ENCODE measurements at regions of chr13 and their contacts with region 1.

Region 1: GRCh38 chr13:75219479-75220237 is 262.3 kb downstream of the TBC1D4 start:
- DNase-seq: peak; percentile 70 to 76 (median 73)
- ATAC-seq: peak; percentile 100
- H3K4me3 ChIP-seq: no peak overlapping the region
- H3K27ac ChIP-seq: no peak overlapping the region
- H3K4me1 ChIP-seq: peaks cover 0 to 3% of the 10 kb centered on the region in 2 experiments; a peak in 2 of 5 replicates
- H3K27me3 ChIP-seq: no peaks in the 10 kb centered on the region
- CTCF ChIP-seq: peak; percentile 80 to 84 (median 81)
- EP300 ChIP-seq: no peak
- POLR2A ChIP-seq: no peak
- RAD21 ChIP-seq: peak; percentile 89 to 93

Region 2: GRCh38 chr13:73754727-73755292 is 1464.8 kb before region 1 on chr13:
- CTCF ChIA-PET with region 1: interaction called, 4 read pairs
- POLR2A ChIA-PET with region 1: no interaction called
- in situ Hi-C with region 1: no loop called
- intact Hi-C with region 1: loop called (anchors 1 kb)
- DNase-seq: peak; percentile 12 to 29 (median 13)
- ATAC-seq: peak; percentile 74
- H3K4me3 ChIP-seq: no peak overlapping the region
- H3K27ac ChIP-seq: no peak overlapping the region
- H3K4me1 ChIP-seq: no peaks in the 10 kb centered on the region
- H3K27me3 ChIP-seq: no peaks in the 10 kb centered on the region
- CTCF ChIP-seq: peak; percentile 21 to 56 (median 54); a peak in 5 of 6 replicates
- EP300 ChIP-seq: no peak
- POLR2A ChIP-seq: no peak
- RAD21 ChIP-seq: peak; percentile 39 to 64

Region 3: GRCh38 chr13:73835138-73835721 is 1384.4 kb before region 1 on chr13:
- CTCF ChIA-PET with region 1: interaction called, 3 read pairs
- POLR2A ChIA-PET with region 1: no interaction called
- in situ Hi-C with region 1: no loop called
- intact Hi-C with region 1: loop called (anchors 1 kb)
- DNase-seq: peak; percentile 20 to 31 (median 24)
- ATAC-seq: no peak
- H3K4me3 ChIP-seq: no peak overlapping the region
- H3K27ac ChIP-seq: no peak overlapping the region
- H3K4me1 ChIP-seq: no peaks in the 10 kb centered on the region
- H3K27me3 ChIP-seq: no peaks in the 10 kb centered on the region
- CTCF ChIP-seq: peak in 2 of 3 experiments; percentile 9 to 45; a peak in 3 of 6 replicates
- EP300 ChIP-seq: no peak
- POLR2A ChIP-seq: no peak
- RAD21 ChIP-seq: peak; percentile 33 to 57

Region 4: DNA sequence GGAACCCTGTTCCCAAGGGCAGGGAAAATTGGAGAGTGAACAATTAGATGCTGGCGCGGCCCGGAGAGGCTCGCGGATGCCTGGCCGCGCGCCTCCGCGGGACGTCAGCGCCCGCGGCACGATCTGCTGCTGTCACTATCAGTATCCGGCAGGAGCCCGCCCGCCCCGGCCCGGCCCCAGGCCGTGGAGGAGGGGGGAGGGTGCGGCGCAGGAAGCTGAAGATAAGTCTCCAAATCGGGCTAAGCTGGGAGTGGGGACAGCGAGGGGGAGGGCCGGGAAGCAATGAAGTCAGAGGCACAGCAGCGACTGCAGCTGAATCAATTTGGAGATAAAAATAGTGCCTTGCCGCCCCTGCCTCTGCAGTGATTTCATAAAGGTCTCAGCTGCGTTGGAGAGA is 643.9 kb before region 1 on chr13:
- CTCF ChIA-PET with region 1: interaction called, 3 read pairs
- POLR2A ChIA-PET with region 1: no interaction called
- in situ Hi-C with region 1: no loop called
- intact Hi-C with region 1: loop called (anchors 2 kb)
- DNase-seq: peak; percentile 19 to 73 (median 40)
- ATAC-seq: peak; percentile 99
- H3K4me3 ChIP-seq: no peak overlapping the region
- H3K27ac ChIP-seq: no peak overlapping the region
- H3K4me1 ChIP-seq: no peaks in the 10 kb centered on the region; a peak in 1 of 5 replicates
- H3K27me3 ChIP-seq: no peaks in the 10 kb centered on the region
- CTCF ChIP-seq: no peak
- EP300 ChIP-seq: peak; percentile 15; the same call in 1 of the 2 replicates
- POLR2A ChIP-seq: no peak
- RAD21 ChIP-seq: no peak

Region 5: DNA sequence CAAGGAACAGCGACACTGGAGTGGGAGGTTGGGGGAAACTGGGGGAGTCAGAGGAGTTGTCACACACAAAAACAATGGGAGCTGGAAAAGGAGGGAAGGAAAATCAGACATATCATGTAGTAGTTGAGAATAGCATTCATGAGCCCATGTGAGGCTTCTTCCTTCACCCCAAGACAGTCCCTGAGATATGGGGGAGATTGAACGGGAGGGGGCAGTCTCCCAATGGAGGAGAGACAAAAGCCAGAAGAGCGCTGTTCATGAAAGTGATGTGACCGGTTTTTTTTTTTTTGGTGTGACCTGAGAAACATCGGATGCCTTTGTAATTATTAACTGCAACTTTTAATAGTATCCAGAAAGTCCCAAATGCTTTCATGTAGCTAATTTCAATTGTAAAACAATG is 453.7 kb before region 1 on chr13:
- CTCF ChIA-PET with region 1: interaction called, 3 read pairs
- POLR2A ChIA-PET with region 1: no interaction called
- in situ Hi-C with region 1: no loop called
- intact Hi-C with region 1: loop called (anchors 1 kb)
- DNase-seq: peak; percentile 5 to 17 (median 8)
- ATAC-seq: peak; percentile 68
- H3K4me3 ChIP-seq: no peak overlapping the region
- H3K27ac ChIP-seq: no peak overlapping the region
- H3K4me1 ChIP-seq: no peaks in the 10 kb centered on the region
- H3K27me3 ChIP-seq: no peaks in the 10 kb centered on the region
- CTCF ChIP-seq: peak; percentile 17 to 43 (median 29); a peak in 3 of 6 replicates
- EP300 ChIP-seq: no peak
- POLR2A ChIP-seq: no peak
- RAD21 ChIP-seq: peak; percentile 23 to 35; a peak in 2 of 4 replicates

Region 6: DNA sequence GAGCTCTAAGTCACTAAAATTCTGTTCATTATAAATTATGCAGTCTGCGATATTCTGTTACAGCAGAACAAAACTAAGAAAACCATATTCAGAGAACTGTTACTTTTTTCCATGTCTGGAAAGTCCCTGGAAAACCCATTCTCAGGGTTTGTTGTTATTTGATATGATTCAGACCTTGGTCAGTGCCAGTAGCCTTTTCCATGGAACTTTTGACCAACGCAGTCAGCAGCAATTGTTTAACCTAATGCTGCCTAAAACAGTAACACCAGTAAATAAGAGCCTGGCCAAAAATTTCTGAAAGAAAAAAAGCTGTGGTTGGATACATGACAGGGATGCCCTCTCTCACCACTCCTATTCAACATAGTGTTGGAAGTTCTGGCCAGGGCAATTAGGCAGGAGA is 140.4 kb before region 1 on chr13:
- CTCF ChIA-PET with region 1: no interaction called
- POLR2A ChIA-PET with region 1: no interaction called
- in situ Hi-C with region 1: no loop called
- intact Hi-C with region 1: no loop called
- DNase-seq: no peak
- ATAC-seq: no peak
- H3K4me3 ChIP-seq: no peak overlapping the region
- H3K27ac ChIP-seq: no peak overlapping the region
- H3K4me1 ChIP-seq: no peaks in the 10 kb centered on the region
- H3K27me3 ChIP-seq: no peaks in the 10 kb centered on the region
- CTCF ChIP-seq: no peak
- EP300 ChIP-seq: no peak
- POLR2A ChIP-seq: no peak
- RAD21 ChIP-seq: no peak

Measured in K562 (cell line).